Heart right ventricle (tissue), 16 donors: ENCODE measurements at regions of chr2 and their contacts with region 1.

Region 1: GRCh38 chr2:69163109-69163508 is 150.1 kb downstream of the ANTXR1 start:
- DNase-seq: no peak
- ATAC-seq: peak in 7 of 8 donors; percentile 46 to 80 (median 68)
- H3K4me3 ChIP-seq: no peak overlapping the region
- H3K27ac ChIP-seq: peak overlapping the region in 4 of 10 donors; percentile 9 to 74 (median 44)
- H3K4me1 ChIP-seq: peaks cover 7 to 70% (median 50%) of the 10 kb centered on the region in 9 donors
- H3K27me3 ChIP-seq: no peaks in the 10 kb centered on the region
- CTCF ChIP-seq: no peak

Region 2: GRCh38 chr2:69026026-69026425 is 137.1 kb before region 1 on chr2:
- intact Hi-C with region 1: loop called in 1 of 10 experiments (anchors 5 kb)
- DNase-seq: peak in 1 of 2 donors; percentile 41
- ATAC-seq: peak; percentile 67 to 91 (median 76)
- H3K4me3 ChIP-seq: no peak overlapping the region
- H3K27ac ChIP-seq: no peak overlapping the region
- H3K4me1 ChIP-seq: peaks cover 0 to 13% (median 2%) of the 10 kb centered on the region in 9 donors
- H3K27me3 ChIP-seq: peaks cover 0 to 1% (median 0%) of the 10 kb centered on the region in 7 donors
- CTCF ChIP-seq: peak; percentile 23 to 72 (median 64)

Region 3: DNA sequence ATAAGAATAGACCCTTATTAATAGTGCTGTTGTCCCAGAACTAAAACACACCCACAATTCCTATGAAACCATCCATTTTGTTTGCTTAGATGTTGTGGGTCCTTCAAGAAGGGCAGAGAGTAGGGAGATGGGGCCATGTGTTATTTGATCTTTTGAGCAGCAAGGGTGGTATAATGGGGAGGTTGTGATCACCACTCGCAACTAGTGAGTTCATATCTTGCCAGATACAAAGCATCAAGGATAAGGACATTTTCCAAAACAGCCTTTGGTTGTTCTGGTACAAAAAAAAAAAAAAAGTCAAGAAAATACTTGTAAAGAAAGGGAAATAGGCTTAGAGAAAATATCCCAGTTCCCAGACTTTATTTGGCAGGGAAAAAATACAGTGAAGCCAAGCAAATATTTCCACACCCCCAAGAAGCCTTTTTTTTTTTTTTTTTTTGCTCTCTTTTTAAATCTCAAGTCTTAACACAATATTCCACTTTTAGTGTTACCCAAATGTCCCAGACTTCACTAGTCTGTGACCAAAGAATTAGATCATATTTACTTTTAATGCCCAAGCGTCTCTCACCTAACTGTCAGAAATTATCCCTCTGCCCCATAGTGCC is 96.0 kb before region 1 on chr2:
- intact Hi-C with region 1: loop called in 1 of 10 experiments (anchors 5 kb)
- DNase-seq: no peak
- ATAC-seq: peak in 6 of 8 donors; percentile 25 to 64 (median 56)
- H3K4me3 ChIP-seq: no peak overlapping the region
- H3K27ac ChIP-seq: peak overlapping the region in 9 of 10 donors; percentile 33 to 68 (median 62)
- H3K4me1 ChIP-seq: peaks cover 0 to 32% (median 15%) of the 10 kb centered on the region in 9 donors
- H3K27me3 ChIP-seq: no peaks in the 10 kb centered on the region
- CTCF ChIP-seq: no peak